Heart right ventricle (tissue), 16 donors: ENCODE measurements at regions of chr7 and their contacts with region 1.

Region 1: GRCh38 chr7:74561898-74562613 is 95.5 kb upstream of the GTF2I start:
- DNase-seq: no peak
- ATAC-seq: peak in 1 of 8 donors; percentile 5
- H3K4me3 ChIP-seq: no peak overlapping the region
- H3K27ac ChIP-seq: no peak overlapping the region
- H3K4me1 ChIP-seq: no peaks in the 10 kb centered on the region
- H3K27me3 ChIP-seq: no peaks in the 10 kb centered on the region
- CTCF ChIP-seq: no peak

Region 2: GRCh38 chr7:74501298-74501697 is 60.8 kb before region 1 on chr7:
- intact Hi-C with region 1: loop called in 1 of 10 experiments (anchors 5 kb)
- DNase-seq: peak; percentile 67 to 68
- ATAC-seq: peak; percentile 60 to 91 (median 79)
- H3K4me3 ChIP-seq: peak overlapping the region in 3 of 10 donors; percentile 17 to 29 (median 24)
- H3K27ac ChIP-seq: peak overlapping the region in 8 of 10 donors; percentile 53 to 82 (median 72)
- H3K4me1 ChIP-seq: peaks cover 0 to 29% (median 3%) of the 10 kb centered on the region in 9 donors
- H3K27me3 ChIP-seq: no peaks in the 10 kb centered on the region
- CTCF ChIP-seq: no peak